AG04450 (cell line): ENCODE measurements at regions of chr4 and their contacts with region 1.

Region 1: DNA sequence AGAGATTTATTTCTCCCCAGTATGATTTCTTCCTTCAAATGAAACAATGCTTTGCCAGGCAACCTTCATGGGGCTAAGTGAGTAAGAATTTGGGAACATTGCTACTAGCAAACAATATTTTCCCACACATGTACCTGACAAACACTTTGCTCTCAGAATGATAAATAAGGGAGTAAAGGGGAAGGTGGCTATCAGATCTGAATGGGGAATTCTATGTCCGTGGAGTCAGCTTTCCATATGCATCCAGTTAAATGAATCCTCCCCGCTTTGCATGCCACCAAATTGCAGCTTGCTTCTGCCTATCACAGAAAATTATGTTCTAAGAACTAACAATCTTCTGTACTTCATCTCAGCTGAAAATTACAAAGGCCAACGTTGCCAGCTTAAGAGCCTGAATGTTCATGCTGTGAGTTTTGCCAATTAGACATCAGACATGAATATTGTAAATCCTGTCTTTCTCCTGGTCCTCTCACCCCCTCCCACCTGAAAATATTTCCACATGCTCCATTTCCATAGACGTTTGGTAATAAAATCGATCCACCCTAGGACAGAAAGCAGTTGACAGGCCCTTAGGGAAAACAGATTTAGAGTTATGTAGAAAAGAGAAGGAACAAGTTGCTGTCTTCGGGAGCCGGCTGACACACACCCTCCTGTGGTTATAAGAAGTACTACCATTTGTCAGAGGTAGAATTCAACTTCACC is 6.3 kb downstream of the MEPE start:
- DNase-seq: peak; percentile 11
- H3K4me3 ChIP-seq: no peak overlapping the region
- H3K27ac ChIP-seq: no peak overlapping the region
- H3K27me3 ChIP-seq: no peaks in the 10 kb centered on the region
- CTCF ChIP-seq: peak; percentile 83

Region 2: DNA sequence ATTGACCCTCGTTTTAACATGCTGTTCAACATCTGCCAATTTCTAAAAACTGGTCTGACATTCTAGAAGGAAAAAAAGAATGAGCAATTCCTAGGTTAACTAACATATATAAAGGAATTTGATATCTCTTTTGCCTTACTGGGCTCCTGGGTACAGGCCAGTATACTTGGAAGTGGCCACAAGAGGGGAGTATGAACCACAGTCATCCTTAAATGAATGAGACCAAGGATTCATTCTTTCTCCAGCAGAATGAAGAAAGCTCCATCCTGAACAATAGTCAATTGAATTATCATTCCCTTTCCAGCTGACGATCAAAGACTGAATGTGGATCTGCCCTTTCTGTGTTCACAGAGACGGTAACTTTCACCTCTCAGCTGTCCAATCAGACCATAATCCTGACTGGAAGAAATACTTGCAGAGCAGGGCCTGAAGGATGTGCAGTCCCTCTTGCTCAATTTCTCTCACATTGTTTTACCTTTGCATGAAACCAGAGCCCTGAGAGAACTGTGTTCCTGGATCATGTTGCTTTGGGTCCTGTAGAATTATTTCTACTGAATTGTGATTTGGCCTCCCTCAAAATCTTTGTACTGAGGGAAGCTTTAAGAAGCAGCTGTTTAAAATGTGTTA is 295.1 kb before region 1 on chr4:
- CTCF ChIA-PET with region 1: interaction called, 10 read pairs
- POLR2A ChIA-PET with region 1: no interaction called
- DNase-seq: no peak
- H3K4me3 ChIP-seq: no peak overlapping the region
- H3K27ac ChIP-seq: no peak overlapping the region
- H3K27me3 ChIP-seq: peaks cover 6% of the 10 kb centered on the region
- CTCF ChIP-seq: peak; percentile 67

Region 3: GRCh38 chr4:87679449-87680169 is 159.4 kb before region 1 on chr4:
- CTCF ChIA-PET with region 1: interaction called, 85 read pairs
- POLR2A ChIA-PET with region 1: no interaction called
- DNase-seq: peak; percentile 46
- H3K4me3 ChIP-seq: no peak overlapping the region
- H3K27ac ChIP-seq: no peak overlapping the region
- H3K27me3 ChIP-seq: peaks cover 3% of the 10 kb centered on the region
- CTCF ChIP-seq: peak; percentile 79

Region 4: GRCh38 chr4:87819281-87819919 is 19.6 kb before region 1 on chr4:
- CTCF ChIA-PET with region 1: interaction called, 21 read pairs
- POLR2A ChIA-PET with region 1: no interaction called
- DNase-seq: peak; percentile 52
- H3K4me3 ChIP-seq: no peak overlapping the region
- H3K27ac ChIP-seq: peak overlapping the region; percentile 70
- H3K27me3 ChIP-seq: no peaks in the 10 kb centered on the region
- CTCF ChIP-seq: no peak

Region 5: DNA sequence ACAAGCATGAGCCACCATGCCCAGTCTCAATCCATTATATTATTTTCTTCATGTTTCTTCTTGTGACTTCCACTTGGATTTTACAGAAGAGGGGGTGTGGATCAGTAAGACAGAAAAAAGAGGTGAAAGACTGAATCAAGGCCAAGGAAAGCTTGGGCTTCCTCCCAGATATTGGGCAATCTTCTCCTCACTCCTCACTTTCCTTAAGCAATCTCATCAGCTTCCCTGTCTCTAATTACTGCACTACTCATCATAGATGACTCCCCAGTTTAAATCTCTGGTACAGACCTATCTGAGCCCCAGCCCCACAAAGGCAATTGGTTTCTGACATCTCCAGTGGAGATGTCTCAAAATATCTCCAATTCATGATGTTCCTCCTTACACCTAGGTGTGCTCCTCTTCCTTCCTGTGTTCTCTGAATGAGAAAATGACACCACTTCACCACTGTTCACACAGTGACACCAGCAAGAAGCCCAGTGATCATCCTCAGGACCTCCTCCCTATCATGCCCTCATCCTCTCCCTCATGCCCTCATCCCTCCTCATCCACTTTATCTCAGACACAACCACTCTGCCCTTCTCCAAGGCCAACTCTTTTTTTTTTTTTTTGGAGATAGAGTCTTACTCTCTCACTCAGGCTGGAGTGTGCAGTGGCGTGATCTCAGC is 494.8 kb after region 1 on chr4:
- CTCF ChIA-PET with region 1: no interaction called
- POLR2A ChIA-PET with region 1: no interaction called
- DNase-seq: no peak
- H3K4me3 ChIP-seq: no peak overlapping the region
- H3K27ac ChIP-seq: no peak overlapping the region
- H3K27me3 ChIP-seq: no peaks in the 10 kb centered on the region
- CTCF ChIP-seq: no peak